GM23248 (cell line): ENCODE measurements at regions of chr1 and their contacts with region 1.

Region 1: DNA sequence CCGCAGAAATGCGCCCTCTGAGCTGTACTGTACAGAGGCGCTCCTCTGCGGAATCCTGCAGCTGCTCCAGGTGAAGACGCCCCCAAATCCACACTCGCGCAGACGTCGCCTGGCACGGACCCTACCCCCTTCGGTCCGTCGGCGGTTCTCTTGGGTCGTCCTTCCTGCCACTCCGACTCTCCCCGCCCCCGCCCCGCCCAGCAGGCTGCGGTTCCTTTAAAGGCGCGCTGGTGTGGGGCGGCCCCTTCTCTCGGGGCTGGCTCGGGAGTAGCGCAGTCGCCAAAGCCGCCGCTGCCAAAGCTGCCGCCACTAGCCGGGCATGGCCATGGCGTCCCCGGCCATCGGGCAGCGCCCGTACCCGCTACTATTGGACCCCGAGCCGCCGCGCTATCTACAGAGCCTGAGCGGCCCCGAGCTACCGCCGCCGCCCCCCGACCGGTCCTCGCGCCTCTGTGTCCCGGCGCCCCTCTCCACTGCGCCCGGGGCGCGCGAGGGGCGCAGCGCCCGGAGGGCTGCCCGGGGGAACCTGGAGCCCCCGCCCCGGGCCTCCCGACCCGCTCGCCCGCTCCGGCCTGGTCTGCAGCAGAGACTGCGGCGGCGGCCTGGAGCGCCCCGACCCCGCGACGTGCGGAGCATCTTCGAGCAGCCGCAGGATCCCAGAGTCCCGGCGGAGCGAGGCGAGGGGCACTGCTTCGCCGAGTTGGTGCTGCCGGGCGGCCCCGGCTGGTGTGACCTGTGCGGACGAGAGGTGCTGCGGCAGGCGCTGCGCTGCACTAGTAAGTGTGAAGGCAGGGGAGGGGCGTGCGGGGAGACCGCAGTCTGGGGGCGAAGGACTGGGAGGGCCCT is at the start of gene RASSF5:
- DNase-seq: peak; percentile 77
- H3K4me3 ChIP-seq: peak within 1 kb of the TSS; percentile 77
- H3K27ac ChIP-seq: no peak within 1 kb of the TSS
- H3K4me1 ChIP-seq: peaks cover 29% of the 10 kb centered on the region
- H3K27me3 ChIP-seq: no peaks in the 10 kb centered on the region
- total RNA-seq, gene RASSF5: 0.22 and 0.89 TPM in 2 replicates

Region 2: GRCh38 chr1:206583707-206584648 is 76.5 kb after region 1 on chr1:
- in situ Hi-C with region 1: loop called (anchors 10 kb)
- DNase-seq: peak; percentile 81
- H3K4me3 ChIP-seq: no peak overlapping the region
- H3K27ac ChIP-seq: no peak overlapping the region
- H3K4me1 ChIP-seq: peaks cover 18% of the 10 kb centered on the region
- H3K27me3 ChIP-seq: no peaks in the 10 kb centered on the region

Region 3: DNA sequence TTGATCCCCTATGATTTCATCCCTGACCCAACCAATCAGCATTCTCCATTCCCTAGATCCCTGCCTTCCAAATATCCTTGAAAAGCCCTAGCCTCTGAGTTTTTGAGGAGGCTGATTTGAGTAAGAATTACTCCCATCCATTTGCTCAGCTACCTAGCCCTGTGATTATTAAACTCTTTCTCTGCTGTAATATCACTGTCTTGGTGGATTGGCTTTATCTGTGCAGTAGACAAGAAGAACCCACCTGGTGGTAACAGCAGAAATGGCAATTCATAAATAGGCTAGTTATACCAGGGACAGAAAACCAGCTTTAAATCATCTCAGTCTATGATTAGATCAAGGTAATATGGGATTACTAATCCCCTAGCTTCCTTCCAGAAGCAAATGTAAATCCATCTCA is 370.9 kb after region 1 on chr1:
- in situ Hi-C with region 1: no loop called
- DNase-seq: no peak
- H3K4me3 ChIP-seq: no peak overlapping the region
- H3K27ac ChIP-seq: no peak overlapping the region
- H3K4me1 ChIP-seq: peaks cover 4% of the 10 kb centered on the region; the same call in 1 of the 2 replicates
- H3K27me3 ChIP-seq: no peaks in the 10 kb centered on the region

Region 4: GRCh38 chr1:207309775-207310273 is 802.3 kb after region 1 on chr1:
- in situ Hi-C with region 1: no loop called
- DNase-seq: peak; percentile 76
- H3K4me3 ChIP-seq: peak overlapping the region; percentile 33
- H3K27ac ChIP-seq: no peak overlapping the region
- H3K4me1 ChIP-seq: peaks cover 27% of the 10 kb centered on the region
- H3K27me3 ChIP-seq: no peaks in the 10 kb centered on the region